ENCODE measurements at regions of chr22 and their contacts with region 1.

Region 1: DNA sequence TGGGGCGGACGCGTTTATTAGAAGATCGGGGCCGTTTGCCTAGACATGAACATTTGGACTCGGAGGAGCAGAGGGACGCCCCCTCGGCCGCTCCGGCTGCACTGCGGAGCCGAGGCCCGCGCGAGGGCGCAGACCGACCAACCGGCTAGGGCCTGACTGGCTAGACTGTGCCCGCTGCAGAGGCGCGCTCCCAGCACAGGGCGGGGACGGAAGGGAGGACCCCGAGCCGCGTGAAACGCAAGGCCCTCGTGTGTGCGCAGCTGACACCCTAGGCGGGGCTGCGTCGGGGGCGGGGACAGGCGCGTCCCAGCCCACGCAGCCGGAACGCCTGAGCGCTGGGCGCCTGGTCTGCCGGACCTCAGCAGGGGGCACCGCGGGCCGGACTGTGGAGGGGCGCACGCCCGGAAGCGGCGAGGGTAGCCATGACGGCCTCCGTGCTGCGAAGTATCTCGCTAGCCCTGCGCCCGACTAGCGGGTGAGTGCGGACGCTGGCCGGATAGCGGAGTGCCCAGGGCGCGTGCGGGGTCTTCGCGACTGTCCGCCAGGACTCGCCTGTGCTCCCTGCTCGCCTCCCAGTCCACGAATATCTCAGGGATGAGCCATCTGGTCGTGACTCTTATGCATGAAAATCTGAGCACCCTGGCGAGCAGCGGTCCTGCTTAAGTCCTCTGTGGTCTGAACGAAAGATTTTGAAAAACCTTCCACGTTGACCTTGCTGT is at the start of gene MRPL40:
- DNase-seq: peak; percentile 94
- H3K4me3 Mint-ChIP-seq: peak within 1 kb of the TSS; percentile 86
- H3K27ac Mint-ChIP-seq: peak within 1 kb of the TSS; percentile 91
- H3K4me1 Mint-ChIP-seq: peaks cover 11% of the 10 kb centered on the region
- H3K27me3 Mint-ChIP-seq: no peaks in the 10 kb centered on the region
- CTCF ChIP-seq: no peak
- total RNA-seq, gene MRPL40: 51.9 and 66.7 TPM in 2 replicates

Region 2: DNA sequence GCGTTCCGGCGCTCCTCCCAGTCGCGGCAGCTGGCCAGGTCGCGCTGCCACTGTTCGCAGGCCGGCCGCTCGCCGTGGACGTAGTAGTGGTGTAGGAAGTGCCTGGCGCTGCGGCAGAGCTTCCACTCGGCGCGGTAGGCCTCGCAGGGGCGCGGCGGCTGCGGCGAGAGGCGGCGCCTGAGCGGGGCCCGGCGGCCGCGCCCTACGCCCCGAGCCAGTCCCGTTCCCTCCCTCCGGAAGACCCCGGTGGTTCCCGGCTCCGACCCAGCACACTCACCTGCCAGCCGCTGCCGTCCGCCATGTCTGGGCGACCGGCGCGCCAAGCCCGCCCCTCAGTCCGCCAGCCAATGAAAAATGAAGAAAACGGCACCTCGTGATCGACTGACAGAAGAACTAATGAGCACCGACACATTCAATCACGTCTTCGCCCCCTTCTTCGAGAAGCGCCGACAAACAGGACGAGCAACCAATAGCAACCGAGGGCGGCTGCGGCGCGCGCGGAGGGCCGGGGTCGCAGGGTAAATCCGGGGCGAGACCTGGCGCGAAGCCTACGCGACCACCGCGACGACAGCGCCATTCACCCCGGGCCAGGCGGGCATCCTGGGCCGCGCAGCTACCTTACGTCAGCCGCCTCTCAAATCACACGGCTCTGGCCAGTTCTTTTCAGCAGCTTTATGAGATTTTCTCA is 15.2 kb after region 1 on chr22 and contains the start of gene C22orf39:
- CTCF ChIA-PET with region 1: interaction called, 5 read pairs
- POLR2A ChIA-PET with region 1: interaction called, 127 read pairs
- intact Hi-C with region 1: loop called (anchors 1 kb)
- DNase-seq: peak; percentile 93
- H3K4me3 Mint-ChIP-seq: peak within 1 kb of the TSS; percentile 73
- H3K27ac Mint-ChIP-seq: peak within 1 kb of the TSS; percentile 9
- H3K4me1 Mint-ChIP-seq: peaks cover 16% of the 10 kb centered on the region
- H3K27me3 Mint-ChIP-seq: no peaks in the 10 kb centered on the region
- CTCF ChIP-seq: no peak
- total RNA-seq, gene C22orf39: 19.1 and 22.2 TPM in 2 replicates

Measured in MCF 10A (cell line).